Activated naive CD4-positive, alpha-beta T cell treated with anti-CD3 and anti-CD28 coated beads for 36 hours (primary cell): ENCODE measurements at regions of chr19 and their contacts with region 1.

Region 1: GRCh38 chr19:28710278-28710677 is 502.7 kb downstream of the UQCRFS1 start:
- DNase-seq: no peak
- H3K4me3 Mint-ChIP-seq: no peak overlapping the region
- H3K27ac Mint-ChIP-seq: no peak overlapping the region
- H3K4me1 Mint-ChIP-seq: no peaks in the 10 kb centered on the region
- H3K27me3 Mint-ChIP-seq: peaks cover 13% of the 10 kb centered on the region

Region 2: GRCh38 chr19:27966390-27966816 is 743.9 kb before region 1 on chr19:
- CTCF ChIA-PET with region 1: no interaction called
- intact Hi-C with region 1: loop called (anchors 2 kb)
- DNase-seq: no peak
- H3K4me3 Mint-ChIP-seq: no peak overlapping the region
- H3K27ac Mint-ChIP-seq: no peak overlapping the region
- H3K4me1 Mint-ChIP-seq: no peaks in the 10 kb centered on the region
- H3K27me3 Mint-ChIP-seq: peaks cover 2% of the 10 kb centered on the region

Region 3: DNA sequence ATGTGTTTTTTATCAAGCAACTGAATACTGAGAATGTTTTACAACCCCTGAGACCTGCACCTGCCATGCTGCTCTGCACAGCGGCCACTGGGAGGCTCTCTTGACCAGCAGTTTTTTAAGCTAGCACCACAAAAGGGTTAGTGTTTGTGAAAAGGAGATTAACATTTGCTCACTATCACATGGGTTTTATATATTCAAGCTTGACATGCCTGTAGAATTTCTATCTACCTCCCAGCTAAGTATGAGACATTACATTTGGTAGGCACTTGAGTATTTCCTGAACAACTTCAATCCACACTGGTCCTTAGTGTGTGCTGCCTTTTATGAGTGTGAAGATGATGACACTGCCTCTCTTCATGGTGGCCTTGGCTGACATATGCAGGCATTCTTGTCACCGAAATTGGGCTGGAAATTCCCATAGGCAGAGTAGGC is 736.2 kb before region 1 on chr19:
- CTCF ChIA-PET with region 1: no interaction called
- intact Hi-C with region 1: loop called (anchors 2 kb)
- DNase-seq: peak; percentile 23
- H3K4me3 Mint-ChIP-seq: no peak overlapping the region
- H3K27ac Mint-ChIP-seq: no peak overlapping the region
- H3K4me1 Mint-ChIP-seq: no peaks in the 10 kb centered on the region
- H3K27me3 Mint-ChIP-seq: no peaks in the 10 kb centered on the region

Region 4: DNA sequence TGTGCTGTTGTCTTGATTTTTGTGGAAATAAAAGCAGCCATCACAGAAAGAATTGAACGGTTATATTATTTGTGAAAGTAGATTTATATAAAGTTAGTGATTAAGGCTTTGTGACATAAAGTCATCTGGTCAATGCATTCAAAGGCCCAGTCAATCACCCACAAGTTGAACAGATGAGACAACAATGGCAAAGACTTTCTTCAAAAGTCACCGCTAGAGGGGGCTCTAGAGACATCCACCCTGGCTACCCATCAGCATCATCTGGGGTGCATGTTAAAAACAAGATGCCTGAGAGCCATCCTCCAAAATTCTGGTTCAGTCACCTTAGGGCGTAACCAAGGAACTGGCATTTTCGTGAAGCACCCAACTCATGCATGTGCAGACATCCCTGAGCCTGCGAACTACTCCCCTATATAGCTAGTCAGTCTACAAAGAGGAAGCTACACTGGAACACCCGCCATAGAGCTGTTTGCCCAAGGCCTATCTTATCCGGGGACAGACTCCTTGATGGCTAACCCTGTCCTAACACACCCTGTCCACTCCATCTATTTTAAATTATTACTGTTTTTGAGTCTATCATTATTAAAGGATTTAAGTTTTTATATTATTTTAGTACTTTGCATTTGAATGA is 467.9 kb before region 1 on chr19:
- CTCF ChIA-PET with region 1: interaction called, 3 read pairs
- intact Hi-C with region 1: loop called (anchors 5 kb)
- DNase-seq: peak; percentile 16
- H3K4me3 Mint-ChIP-seq: no peak overlapping the region
- H3K27ac Mint-ChIP-seq: no peak overlapping the region
- H3K4me1 Mint-ChIP-seq: no peaks in the 10 kb centered on the region
- H3K27me3 Mint-ChIP-seq: no peaks in the 10 kb centered on the region

Region 5: GRCh38 chr19:28466107-28467045 is 243.9 kb before region 1 on chr19:
- CTCF ChIA-PET with region 1: interaction called, 5 read pairs
- intact Hi-C with region 1: loop called (anchors 1 kb)
- DNase-seq: peak; percentile 77
- H3K4me3 Mint-ChIP-seq: no peak overlapping the region
- H3K27ac Mint-ChIP-seq: no peak overlapping the region
- H3K4me1 Mint-ChIP-seq: peaks cover 14% of the 10 kb centered on the region
- H3K27me3 Mint-ChIP-seq: peaks cover 6% of the 10 kb centered on the region

Region 6: GRCh38 chr19:28652765-28653164 is 57.5 kb before region 1 on chr19:
- CTCF ChIA-PET with region 1: no interaction called
- intact Hi-C with region 1: no loop called
- DNase-seq: no peak
- H3K4me3 Mint-ChIP-seq: no peak overlapping the region
- H3K27ac Mint-ChIP-seq: no peak overlapping the region
- H3K4me1 Mint-ChIP-seq: no peaks in the 10 kb centered on the region
- H3K27me3 Mint-ChIP-seq: no peaks in the 10 kb centered on the region